Aorta (tissue), 5 donors: ENCODE measurements at regions of chr9 and their contacts with region 1.

Region 1: DNA sequence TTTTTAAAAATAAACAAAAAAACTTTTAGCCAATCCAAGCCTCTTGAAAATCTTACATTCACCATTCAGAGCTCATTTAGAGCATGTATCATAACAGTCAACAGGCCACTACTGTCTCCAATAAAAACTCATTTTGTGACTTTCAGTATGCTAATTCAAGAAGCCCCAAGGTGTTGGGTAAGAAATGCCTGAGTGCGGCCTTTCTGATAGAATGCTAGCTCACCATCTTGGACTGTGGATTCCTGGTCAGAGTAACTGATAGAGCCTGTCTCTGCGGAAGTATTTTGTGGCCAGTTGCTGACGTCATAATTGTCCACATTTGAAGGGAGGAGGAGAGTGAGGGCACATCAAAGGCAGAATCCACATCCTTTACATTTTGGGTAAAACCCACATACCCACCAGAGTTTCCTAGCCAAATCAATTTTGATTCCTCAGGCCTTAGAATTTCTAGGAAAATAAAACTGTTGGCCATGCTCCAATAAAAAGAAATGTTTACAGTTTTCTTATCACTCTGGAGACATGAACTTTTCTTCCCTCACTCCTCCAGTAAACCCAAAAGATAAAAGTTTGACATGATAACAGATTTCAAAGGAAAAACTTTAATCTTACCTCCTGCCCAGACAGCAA is 41.1 kb upstream of the ERCC6L2 start:
- DNase-seq: no peak
- ATAC-seq: no peak
- H3K4me3 ChIP-seq: no peak overlapping the region
- H3K27ac ChIP-seq: no peak overlapping the region
- H3K4me1 ChIP-seq: no peaks in the 10 kb centered on the region
- H3K27me3 ChIP-seq: no peaks in the 10 kb centered on the region

Region 2: DNA sequence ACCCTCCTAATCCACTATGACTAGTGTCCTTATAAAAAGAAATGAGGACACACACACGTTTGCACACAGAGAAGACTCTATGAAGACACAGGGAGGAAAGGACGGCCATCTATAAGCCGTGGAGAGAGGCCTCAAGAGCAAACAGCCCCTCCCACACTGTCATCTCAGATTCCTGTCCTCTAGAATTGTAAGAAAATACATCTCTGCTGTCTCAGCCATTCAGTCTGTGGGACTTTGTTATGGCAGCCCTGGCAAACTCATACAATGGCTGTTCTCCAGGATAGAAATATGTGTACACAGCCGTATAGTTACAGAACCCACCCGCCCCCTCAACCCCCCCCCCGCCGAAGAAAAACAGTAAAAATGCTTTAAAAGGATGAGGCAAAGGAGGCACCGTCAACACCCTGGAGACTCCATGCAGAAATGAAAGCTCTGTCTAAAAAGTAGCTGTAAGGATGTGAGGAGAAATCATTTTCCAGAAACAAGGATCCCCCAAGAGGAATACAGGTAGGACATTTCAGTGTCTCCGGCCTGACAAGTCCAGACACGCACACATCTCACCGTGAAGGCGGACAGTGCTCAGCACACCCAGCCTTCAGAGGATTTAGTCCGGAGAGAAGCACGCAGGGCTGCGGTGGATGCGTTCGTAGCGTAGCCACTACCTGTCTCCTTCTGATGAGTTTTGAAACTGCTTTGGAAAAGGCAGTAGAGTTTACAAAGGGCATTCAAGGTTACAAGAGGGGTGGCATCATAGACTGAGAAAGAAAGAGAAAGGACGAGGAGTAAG is 69.7 kb before region 1 on chr9:
- intact Hi-C with region 1: loop called in 1 of 2 experiments (anchors 10 kb)
- DNase-seq: no peak
- ATAC-seq: no peak
- H3K4me3 ChIP-seq: no peak overlapping the region
- H3K27ac ChIP-seq: no peak overlapping the region
- H3K4me1 ChIP-seq: no peaks in the 10 kb centered on the region
- H3K27me3 ChIP-seq: no peaks in the 10 kb centered on the region

Region 3: DNA sequence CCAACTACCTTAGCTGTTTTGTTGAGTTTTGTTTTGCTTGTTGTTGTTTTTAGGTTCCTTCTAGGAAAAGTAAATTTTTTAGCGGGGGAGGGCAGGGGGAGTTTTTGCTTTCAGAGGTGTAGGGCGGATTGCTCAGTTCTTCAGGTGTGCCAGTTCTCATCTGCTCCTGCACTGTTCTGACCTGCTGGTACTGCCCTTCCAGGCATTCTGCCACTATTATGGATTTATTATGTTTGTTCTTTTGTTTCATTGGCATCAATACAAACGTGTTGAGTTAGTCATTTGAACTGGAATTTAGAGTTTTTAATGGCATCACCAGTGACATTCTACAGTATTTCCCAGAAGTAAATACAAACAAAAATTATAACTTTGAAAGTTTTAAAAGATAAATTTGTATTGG is 67.1 kb after region 1 on chr9:
- intact Hi-C with region 1: no loop called
- DNase-seq: no peak
- ATAC-seq: no peak
- H3K4me3 ChIP-seq: no peak overlapping the region
- H3K27ac ChIP-seq: no peak overlapping the region
- H3K4me1 ChIP-seq: no peaks in the 10 kb centered on the region
- H3K27me3 ChIP-seq: no peaks in the 10 kb centered on the region